ENCODE measurements at regions of chr5 and their contacts with region 1.

Region 1: DNA sequence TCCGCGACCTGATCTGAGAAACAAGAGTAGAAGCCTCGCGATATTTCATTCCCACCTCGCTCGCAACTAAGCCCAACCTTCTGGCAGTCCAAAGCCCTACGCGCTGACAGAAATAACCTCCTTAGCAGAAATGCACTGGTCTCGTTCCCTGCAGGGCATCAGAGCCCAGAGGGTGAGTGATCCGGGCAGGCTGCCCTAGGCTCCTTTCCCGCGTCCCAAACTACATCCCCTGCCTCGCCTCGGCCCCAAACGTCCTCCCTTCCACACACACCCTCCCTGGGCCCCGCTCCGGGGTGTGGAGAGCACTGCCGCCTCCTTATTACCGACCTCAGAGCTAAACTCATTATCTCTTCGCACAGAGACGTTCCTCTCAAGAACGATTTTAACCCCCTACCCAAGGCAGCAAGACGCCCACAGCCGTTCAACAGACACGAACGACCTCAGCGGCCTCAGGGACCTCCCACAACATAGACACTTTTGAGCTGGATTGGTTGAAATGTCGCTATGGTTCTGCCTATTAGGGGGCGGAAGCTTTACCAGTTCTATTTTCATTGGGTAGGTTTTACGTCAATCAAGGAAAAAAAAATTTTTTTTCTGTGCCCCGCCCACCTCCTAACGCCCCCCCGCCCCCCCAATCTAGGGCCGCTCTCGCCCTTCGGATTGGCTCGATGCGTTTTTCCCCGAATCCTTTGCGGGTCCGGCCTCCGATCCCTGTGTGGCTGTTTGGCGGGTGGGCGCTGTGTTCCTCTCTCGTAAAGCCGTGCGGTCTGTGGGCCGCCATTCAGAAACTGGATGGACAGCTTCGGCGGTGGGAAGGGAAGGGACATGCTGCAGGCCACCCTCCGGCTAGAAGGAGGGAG is at the start of gene CETN3:
- DNase-seq: peak; percentile 88

Region 2: DNA sequence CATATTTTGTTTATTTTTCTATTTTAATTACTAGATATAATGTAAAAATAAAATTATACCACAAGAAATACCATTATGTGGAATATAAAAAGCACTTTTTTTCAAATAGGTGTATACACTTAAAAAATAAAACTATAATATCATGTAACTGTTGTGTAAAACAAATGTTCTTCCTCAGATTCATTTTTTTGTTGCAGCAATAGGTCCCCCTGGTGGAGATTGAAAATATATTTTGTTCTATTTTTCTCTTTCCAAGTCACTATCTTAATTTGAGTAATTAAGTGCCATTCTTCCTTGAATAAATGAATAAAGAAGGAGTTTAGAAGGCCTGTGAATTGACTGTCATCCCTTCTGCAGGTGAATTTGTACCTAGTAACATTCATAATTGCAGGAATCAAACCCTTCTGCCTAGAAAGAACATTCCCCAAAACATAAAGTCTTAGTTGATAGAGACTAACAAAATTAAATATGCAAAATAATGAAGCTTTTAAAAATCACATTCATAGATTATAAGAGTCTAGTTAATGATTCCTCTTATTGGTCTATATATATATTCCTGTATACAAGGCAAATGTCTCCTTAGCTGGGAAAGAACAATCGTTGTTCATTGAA is 23.3 kb before region 1 on chr5:
- CTCF ChIA-PET with region 1: no interaction called
- POLR2A ChIA-PET with region 1: interaction called, 39 read pairs
- DNase-seq: no peak

Region 3: DNA sequence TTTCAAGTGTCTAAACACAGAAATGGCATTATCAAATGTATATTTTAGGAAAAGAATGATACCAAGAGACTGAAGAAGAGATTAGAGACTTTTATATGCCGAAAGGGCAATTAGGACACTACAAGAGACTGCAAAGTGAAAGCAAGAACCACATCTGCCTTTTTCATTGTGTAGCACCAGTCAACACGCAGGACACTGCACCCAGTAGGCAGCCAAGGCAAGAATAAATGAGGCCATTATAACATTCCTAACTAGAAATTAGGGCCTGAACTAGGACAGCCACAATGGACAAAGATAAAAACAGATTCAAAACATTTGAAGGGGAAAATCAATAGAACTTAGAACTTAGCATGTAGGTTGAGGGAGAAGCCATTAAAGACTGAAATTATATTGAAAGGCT is 10.8 kb before region 1 on chr5:
- CTCF ChIA-PET with region 1: no interaction called
- POLR2A ChIA-PET with region 1: interaction called, 37 read pairs
- DNase-seq: no peak

Region 4: GRCh38 chr5:90421136-90421535 is 11.6 kb after region 1 on chr5:
- CTCF ChIA-PET with region 1: interaction called, 9 read pairs
- POLR2A ChIA-PET with region 1: interaction called, 43 read pairs
- DNase-seq: peak; percentile 45

Region 5: GRCh38 chr5:90548069-90548593 is 138.6 kb after region 1 on chr5:
- CTCF ChIA-PET with region 1: no interaction called
- POLR2A ChIA-PET with region 1: interaction called, 29 read pairs
- DNase-seq: peak; percentile 55

Region 6: GRCh38 chr5:90558344-90559192 is 149.0 kb after region 1 on chr5 and contains the start of gene ADGRV1:
- CTCF ChIA-PET with region 1: no interaction called
- POLR2A ChIA-PET with region 1: interaction called, 10 read pairs
- DNase-seq: peak; percentile 92

Measured in HEK293T (cell line).